H1 (cell line): ENCODE measurements at regions of chr14 and their contacts with region 1.

Region 1: DNA sequence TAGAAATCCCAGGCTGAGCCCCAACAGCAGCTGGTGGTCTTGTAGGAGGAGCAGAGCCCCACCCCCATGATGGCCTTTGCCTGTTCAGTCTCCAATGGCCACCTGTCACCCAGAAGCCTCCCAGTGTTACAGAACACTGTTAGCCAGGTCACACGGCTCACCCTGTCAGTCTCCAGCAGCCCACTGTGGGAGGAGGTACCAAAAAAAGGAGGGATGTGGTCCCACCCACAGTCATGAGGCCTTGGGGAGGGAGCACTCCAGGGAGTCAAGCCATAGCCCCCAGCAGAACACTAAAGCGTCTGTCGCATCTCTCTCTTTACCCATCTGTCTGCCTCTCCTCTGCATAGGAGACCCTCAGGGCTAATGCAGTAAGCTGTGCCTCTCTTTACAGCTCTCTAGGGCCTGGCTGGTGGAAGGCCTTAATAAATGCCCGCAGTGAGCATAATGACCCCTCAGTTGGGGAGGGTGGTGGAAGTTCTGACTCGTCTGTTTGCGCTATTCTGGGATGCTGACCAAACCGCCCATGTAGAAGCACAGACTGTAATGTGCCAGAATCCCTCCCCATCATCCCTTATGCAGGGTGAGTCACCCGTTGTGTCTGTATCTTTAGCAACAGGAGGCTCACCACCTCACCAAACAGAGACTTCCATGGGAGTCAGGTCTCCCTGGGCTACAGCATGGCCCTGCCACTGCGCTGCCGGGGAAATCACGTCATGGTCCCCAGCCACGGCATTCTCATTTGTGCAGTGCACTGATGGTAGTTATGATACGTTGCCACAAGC is 14.6 kb downstream of the C14orf132 start:
- DNase-seq: peak in 1 of 2 experiments; percentile 35
- H3K4me3 ChIP-seq: no peak overlapping the region
- H3K27ac ChIP-seq: no peak overlapping the region
- H3K4me1 ChIP-seq: no peaks in the 10 kb centered on the region; a peak in 2 of 7 replicates
- H3K27me3 ChIP-seq: no peaks in the 10 kb centered on the region
- CTCF ChIP-seq: no peak
- EP300 ChIP-seq: no peak
- POLR2A ChIP-seq: no peak
- RAD21 ChIP-seq: no peak

Region 2: DNA sequence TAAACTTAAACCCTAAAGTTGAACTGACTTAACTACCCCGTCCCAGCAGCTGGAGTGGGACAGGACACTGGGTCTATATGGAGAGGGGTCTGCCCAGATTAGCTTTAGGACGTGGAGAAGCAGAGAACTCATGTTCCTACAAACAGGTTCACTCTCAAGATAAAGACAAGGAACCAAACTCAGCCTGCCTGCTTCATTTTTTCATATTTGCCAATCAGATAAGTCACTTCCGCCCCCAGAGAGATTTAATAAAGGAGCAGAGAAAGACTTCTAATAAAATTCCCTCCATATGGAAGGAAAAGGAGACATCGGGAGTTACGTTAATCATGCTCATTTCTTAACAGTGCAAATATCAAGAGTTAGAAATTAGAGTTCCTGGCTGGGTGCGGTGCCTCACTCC is 297.7 kb before region 1 on chr14:
- CTCF ChIA-PET with region 1: no interaction called
- POLR2A ChIA-PET with region 1: no interaction called
- DNase-seq: no peak
- H3K4me3 ChIP-seq: no peak overlapping the region
- H3K27ac ChIP-seq: no peak overlapping the region
- H3K4me1 ChIP-seq: peaks cover 0 to 6% (median 3%) of the 10 kb centered on the region in 4 experiments; a peak in 4 of 7 replicates
- H3K27me3 ChIP-seq: no peaks in the 10 kb centered on the region
- CTCF ChIP-seq: no peak
- EP300 ChIP-seq: no peak
- POLR2A ChIP-seq: no peak
- RAD21 ChIP-seq: no peak

Region 3: GRCh38 chr14:96038920-96039632 is 14.7 kb before region 1 on chr14 and contains the start of gene C14orf132:
- CTCF ChIA-PET with region 1: interaction called, 27 read pairs
- POLR2A ChIA-PET with region 1: interaction called, 9 read pairs
- DNase-seq: peak in 1 of 2 experiments; percentile 80
- H3K4me3 ChIP-seq: peak within 1 kb of the TSS; percentile 75 to 95 (median 83)
- H3K27ac ChIP-seq: no peak within 1 kb of the TSS
- H3K4me1 ChIP-seq: peaks cover 5 to 12% (median 7%) of the 10 kb centered on the region in 4 experiments; a peak in 6 of 7 replicates
- H3K27me3 ChIP-seq: peaks cover 0 to 15% (median 12%) of the 10 kb centered on the region in 4 experiments; a peak in 6 of 7 replicates
- CTCF ChIP-seq: no peak
- EP300 ChIP-seq: no peak
- POLR2A ChIP-seq: peak in 1 of 2 experiments; percentile 88; a peak in 2 of 3 replicates
- RAD21 ChIP-seq: no peak
- total RNA-seq, gene C14orf132: 32.0 and 32.5 TPM in 2 replicates

Region 4: GRCh38 chr14:96065664-96066459 is 12.1 kb after region 1 on chr14:
- CTCF ChIA-PET with region 1: interaction called, 23 read pairs
- POLR2A ChIA-PET with region 1: interaction called, 4 read pairs
- DNase-seq: no peak
- H3K4me3 ChIP-seq: no peak overlapping the region
- H3K27ac ChIP-seq: no peak overlapping the region
- H3K4me1 ChIP-seq: no peaks in the 10 kb centered on the region
- H3K27me3 ChIP-seq: no peaks in the 10 kb centered on the region
- CTCF ChIP-seq: no peak
- EP300 ChIP-seq: no peak
- POLR2A ChIP-seq: no peak
- RAD21 ChIP-seq: no peak

Region 5: DNA sequence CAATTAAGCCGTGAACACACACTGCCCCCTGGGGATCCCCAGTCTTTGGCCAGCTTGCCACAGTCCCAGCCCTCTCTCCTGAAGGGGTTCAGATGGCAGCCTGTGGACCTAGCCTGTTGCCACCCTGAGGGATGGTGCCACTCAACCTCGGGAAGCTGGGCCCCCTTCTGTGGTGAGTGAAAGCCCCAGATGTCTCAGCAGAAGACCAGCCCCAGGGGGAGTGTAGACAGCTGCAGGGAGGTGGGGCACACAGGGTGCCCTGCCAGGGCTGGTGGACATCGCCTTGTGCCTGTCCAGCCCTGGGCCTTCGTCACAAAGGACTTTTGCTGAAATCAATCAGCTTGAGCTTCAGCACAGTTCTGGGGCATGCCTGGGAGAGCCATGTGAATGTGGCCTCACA is 17.8 kb after region 1 on chr14:
- CTCF ChIA-PET with region 1: interaction called, 23 read pairs
- POLR2A ChIA-PET with region 1: no interaction called
- DNase-seq: no peak
- H3K4me3 ChIP-seq: no peak overlapping the region
- H3K27ac ChIP-seq: no peak overlapping the region
- H3K4me1 ChIP-seq: no peaks in the 10 kb centered on the region; a peak in 1 of 7 replicates
- H3K27me3 ChIP-seq: no peaks in the 10 kb centered on the region
- CTCF ChIP-seq: no peak
- EP300 ChIP-seq: no peak
- POLR2A ChIP-seq: no peak
- RAD21 ChIP-seq: no peak

Region 6: GRCh38 chr14:96090441-96091133 is 36.8 kb after region 1 on chr14:
- CTCF ChIA-PET with region 1: interaction called, 23 read pairs
- POLR2A ChIA-PET with region 1: no interaction called
- DNase-seq: no peak
- H3K4me3 ChIP-seq: no peak overlapping the region
- H3K27ac ChIP-seq: no peak overlapping the region
- H3K4me1 ChIP-seq: peaks cover 2 to 6% (median 6%) of the 10 kb centered on the region in 4 experiments; a peak in 5 of 7 replicates
- H3K27me3 ChIP-seq: no peaks in the 10 kb centered on the region
- CTCF ChIP-seq: no peak
- EP300 ChIP-seq: no peak
- POLR2A ChIP-seq: no peak
- RAD21 ChIP-seq: no peak

Region 7: GRCh38 chr14:96204151-96205058 is 150.6 kb after region 1 on chr14 and contains the start of gene BDKRB2:
- CTCF ChIA-PET with region 1: no interaction called
- POLR2A ChIA-PET with region 1: no interaction called
- DNase-seq: peak; percentile 17 to 69
- H3K4me3 ChIP-seq: peak within 1 kb of the TSS; percentile 25 to 63 (median 44)
- H3K27ac ChIP-seq: no peak within 1 kb of the TSS
- H3K4me1 ChIP-seq: peaks cover 0 to 22% (median 5%) of the 10 kb centered on the region in 4 experiments; a peak in 5 of 7 replicates
- H3K27me3 ChIP-seq: peaks cover 0 to 22% (median 19%) of the 10 kb centered on the region in 4 experiments; a peak in 6 of 7 replicates
- CTCF ChIP-seq: no peak
- EP300 ChIP-seq: no peak
- POLR2A ChIP-seq: no peak
- RAD21 ChIP-seq: no peak
- total RNA-seq, gene BDKRB2: 0.13 TPM in 2 replicates